ENCODE measurements at regions of chr4 and their contacts with region 1.

Region 1: DNA sequence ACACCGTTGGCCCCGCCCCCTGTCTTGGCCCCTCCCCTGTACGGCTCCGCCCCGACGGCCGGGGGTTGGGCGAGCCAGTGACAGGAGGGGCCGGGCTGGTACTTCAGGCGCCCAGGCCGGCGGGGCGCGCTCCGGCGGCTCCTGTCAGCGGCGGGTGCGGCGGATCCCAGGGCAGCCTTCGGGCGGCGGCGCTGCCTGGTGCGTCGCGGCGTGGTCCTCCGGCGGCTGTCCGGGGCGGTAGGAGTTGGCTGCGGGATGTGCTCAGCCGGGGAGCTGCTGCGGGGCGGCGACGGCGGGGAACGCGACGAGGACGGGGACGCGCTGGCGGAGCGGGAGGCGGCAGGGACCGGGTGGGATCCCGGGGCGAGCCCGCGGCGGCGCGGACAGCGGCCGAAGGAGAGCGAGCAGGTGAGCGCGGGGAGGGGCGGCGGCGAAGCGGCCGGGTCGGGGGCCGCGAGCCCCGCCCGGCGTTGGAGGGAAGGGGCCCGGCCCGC is at the start of gene FAM241A:
- DNase-seq: peak; percentile 86 to 89 (median 86)
- H3K4me3 ChIP-seq: peak within 1 kb of the TSS; percentile 82 to 88
- H3K4me3 Mint-ChIP-seq: peak within 1 kb of the TSS; percentile 87 to 99 (median 94)
- H3K27ac ChIP-seq: peak within 1 kb of the TSS; percentile 82
- H3K27ac Mint-ChIP-seq: peak within 1 kb of the TSS; percentile 85 to 99 (median 96)
- H3K4me1 ChIP-seq: peaks cover 29% of the 10 kb centered on the region
- H3K4me1 Mint-ChIP-seq: peaks cover 22 to 34% (median 26%) of the 10 kb centered on the region in 4 donors
- H3K27me3 ChIP-seq: no peaks in the 10 kb centered on the region
- H3K27me3 Mint-ChIP-seq: no peaks in the 10 kb centered on the region
- total RNA-seq, gene FAM241A: 2.7 TPM

Region 2: DNA sequence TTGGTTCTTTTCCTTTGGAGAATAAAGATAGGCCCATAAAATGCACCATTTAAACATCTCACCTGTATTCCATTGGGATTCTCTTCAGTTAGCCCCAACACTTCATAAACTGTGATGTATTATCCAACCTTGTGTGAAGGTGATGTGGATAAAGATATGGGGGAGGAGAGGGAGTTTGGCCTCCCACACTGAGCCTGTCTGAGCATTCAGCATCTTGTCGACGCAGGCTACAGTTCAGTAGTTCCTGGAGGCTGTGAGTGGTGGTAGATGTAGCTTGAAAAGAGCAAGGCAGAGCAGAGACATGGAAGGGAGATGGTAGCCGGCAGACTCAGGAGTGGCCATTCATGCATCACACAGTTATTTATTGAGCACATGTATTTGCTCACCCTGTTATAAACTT is 1230.1 kb before region 1 on chr4:
- CTCF ChIA-PET with region 1: no interaction called
- POLR2A ChIA-PET with region 1: no interaction called
- intact Hi-C with region 1: no loop called
- DNase-seq: no peak
- H3K4me3 ChIP-seq: no peak overlapping the region
- H3K4me3 Mint-ChIP-seq: no peak overlapping the region
- H3K27ac ChIP-seq: no peak overlapping the region
- H3K27ac Mint-ChIP-seq: no peak overlapping the region
- H3K4me1 ChIP-seq: no peaks in the 10 kb centered on the region
- H3K4me1 Mint-ChIP-seq: no peaks in the 10 kb centered on the region
- H3K27me3 ChIP-seq: no peaks in the 10 kb centered on the region
- H3K27me3 Mint-ChIP-seq: no peaks in the 10 kb centered on the region

Region 3: GRCh38 chr4:111977419-111977965 is 167.9 kb before region 1 on chr4:
- CTCF ChIA-PET with region 1: no interaction called
- POLR2A ChIA-PET with region 1: no interaction called
- intact Hi-C with region 1: no loop called
- DNase-seq: no peak
- H3K4me3 ChIP-seq: no peak overlapping the region
- H3K4me3 Mint-ChIP-seq: no peak overlapping the region
- H3K27ac ChIP-seq: no peak overlapping the region
- H3K27ac Mint-ChIP-seq: no peak overlapping the region
- H3K4me1 ChIP-seq: no peaks in the 10 kb centered on the region
- H3K4me1 Mint-ChIP-seq: no peaks in the 10 kb centered on the region
- H3K27me3 ChIP-seq: no peaks in the 10 kb centered on the region
- H3K27me3 Mint-ChIP-seq: peaks cover 3 to 6% of the 10 kb centered on the region in 2 donors

Region 4: DNA sequence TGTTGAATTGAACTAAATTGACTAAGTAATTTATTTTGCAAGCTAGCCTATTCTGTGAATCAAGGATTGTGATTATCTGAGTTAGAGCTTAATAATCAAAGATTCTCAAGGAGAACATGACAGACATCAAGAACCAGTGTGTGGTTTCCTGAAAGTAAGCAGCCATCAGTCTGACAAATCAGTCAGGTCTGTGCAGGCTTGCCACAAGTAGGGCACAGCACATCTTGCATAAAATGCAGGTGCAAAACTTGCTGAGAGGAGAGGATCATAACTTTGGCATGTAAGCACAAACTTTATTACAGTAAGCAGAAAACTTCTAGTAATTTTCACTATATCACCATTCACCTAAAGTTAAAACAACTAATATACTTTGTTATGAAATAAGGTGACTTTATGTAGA is 22.4 kb after region 1 on chr4:
- CTCF ChIA-PET with region 1: interaction called, 5 read pairs
- POLR2A ChIA-PET with region 1: no interaction called
- intact Hi-C with region 1: loop called (anchors 2 kb)
- DNase-seq: peak; percentile 32 to 57 (median 55)
- H3K4me3 ChIP-seq: no peak overlapping the region
- H3K4me3 Mint-ChIP-seq: peak overlapping the region in 6 of 8 donors; percentile 19 to 69 (median 50)
- H3K27ac ChIP-seq: no peak overlapping the region
- H3K27ac Mint-ChIP-seq: peak overlapping the region in 6 of 7 donors; percentile 7 to 84 (median 38)
- H3K4me1 ChIP-seq: peaks cover 45% of the 10 kb centered on the region
- H3K4me1 Mint-ChIP-seq: peaks cover 20 to 53% (median 30%) of the 10 kb centered on the region in 4 donors
- H3K27me3 ChIP-seq: no peaks in the 10 kb centered on the region
- H3K27me3 Mint-ChIP-seq: no peaks in the 10 kb centered on the region

Region 5: DNA sequence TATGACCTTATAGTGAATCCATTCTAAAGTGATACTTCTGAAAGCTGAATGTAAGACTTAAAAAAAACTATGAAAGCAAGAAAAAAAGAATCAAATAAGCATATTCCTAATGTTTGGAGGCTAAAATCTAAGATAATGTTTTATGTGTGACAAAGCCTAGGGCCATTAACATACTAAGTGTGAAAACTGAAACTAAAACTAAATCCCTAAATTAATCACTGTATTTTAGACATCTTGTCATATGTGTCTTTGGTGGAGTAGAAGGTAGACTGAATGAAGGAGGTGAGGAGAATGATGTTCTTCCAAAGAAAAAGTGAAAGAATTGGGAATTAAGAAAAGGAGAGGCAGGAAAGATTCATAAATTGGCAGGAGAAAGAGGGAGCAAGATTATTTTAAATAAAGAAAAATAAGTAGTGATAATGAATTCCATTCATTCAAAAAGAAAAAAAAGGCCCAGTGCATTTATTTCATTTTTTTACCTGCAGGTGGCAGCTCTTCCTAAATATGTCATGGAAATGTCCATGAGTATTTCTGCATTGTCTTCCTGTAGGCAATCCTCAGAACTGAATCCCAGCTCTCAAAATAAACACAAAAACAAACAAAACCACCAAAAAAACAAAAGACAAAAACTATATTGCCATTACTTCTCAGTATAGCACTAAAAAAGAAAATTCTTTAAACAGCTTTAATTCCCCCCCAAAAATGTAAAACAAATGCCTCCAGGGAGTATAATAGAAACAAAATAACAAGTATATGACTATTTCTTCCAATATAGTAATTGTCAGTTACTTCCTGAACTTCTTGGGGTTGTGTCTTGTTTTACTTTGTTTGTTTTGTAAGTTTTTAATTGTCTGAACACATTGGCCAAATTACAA is 69.3 kb after region 1 on chr4:
- CTCF ChIA-PET with region 1: no interaction called
- POLR2A ChIA-PET with region 1: no interaction called
- intact Hi-C with region 1: loop called (anchors 5 kb)
- DNase-seq: peak in 4 of 5 donors; percentile 17 to 24 (median 20)
- H3K4me3 ChIP-seq: no peak overlapping the region
- H3K4me3 Mint-ChIP-seq: no peak overlapping the region
- H3K27ac ChIP-seq: no peak overlapping the region
- H3K27ac Mint-ChIP-seq: peak overlapping the region in 2 of 7 donors; percentile 2 to 26
- H3K4me1 ChIP-seq: no peaks in the 10 kb centered on the region
- H3K4me1 Mint-ChIP-seq: peaks cover 0 to 5% (median 2%) of the 10 kb centered on the region in 4 donors
- H3K27me3 ChIP-seq: no peaks in the 10 kb centered on the region
- H3K27me3 Mint-ChIP-seq: no peaks in the 10 kb centered on the region

Region 6: DNA sequence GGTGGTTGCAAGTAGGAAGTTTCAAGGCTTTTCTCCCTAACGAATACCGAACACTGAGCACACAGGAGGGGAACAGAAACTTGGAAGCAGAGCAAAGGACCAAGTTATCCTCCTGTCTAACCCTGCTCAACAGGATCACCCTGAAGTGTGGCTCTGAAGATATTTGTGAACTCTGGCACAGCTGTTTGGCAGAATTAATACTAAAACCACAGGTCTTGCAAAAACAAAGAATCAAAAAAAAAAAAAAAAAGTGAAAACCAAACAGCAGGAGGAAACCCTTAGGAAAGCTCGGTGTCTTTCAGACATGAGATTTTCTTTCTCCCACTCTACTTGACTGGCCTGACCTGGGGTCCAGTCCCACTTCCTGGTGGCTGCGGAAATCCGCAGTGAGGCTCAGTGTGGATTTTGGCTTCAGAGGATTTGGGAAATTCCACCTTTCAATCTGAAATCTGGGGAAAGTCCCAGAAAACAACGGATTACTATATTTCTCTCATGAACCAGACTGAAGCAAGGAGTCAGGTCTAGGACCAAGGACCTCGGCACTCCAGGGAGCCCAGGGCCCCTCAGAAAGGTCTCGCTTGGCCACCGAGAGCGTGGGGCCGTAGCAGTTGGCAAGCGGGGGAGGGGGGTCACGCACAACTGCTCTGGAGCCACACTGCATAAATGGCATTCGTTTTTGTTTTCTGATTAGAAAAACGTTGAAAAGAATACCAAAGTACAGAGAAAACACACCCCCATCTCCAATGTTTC is 139.5 kb after region 1 on chr4:
- CTCF ChIA-PET with region 1: no interaction called
- POLR2A ChIA-PET with region 1: interaction called, 20 read pairs
- intact Hi-C with region 1: loop called (anchors 2 kb)
- DNase-seq: peak in 3 of 5 donors; percentile 15 to 22 (median 15)
- H3K4me3 ChIP-seq: peak overlapping the region; percentile 88 to 94
- H3K4me3 Mint-ChIP-seq: peak overlapping the region; percentile 92 to 98 (median 96)
- H3K27ac ChIP-seq: peak overlapping the region; percentile 79
- H3K27ac Mint-ChIP-seq: peak overlapping the region; percentile 91 to 99 (median 94)
- H3K4me1 ChIP-seq: peaks cover 85% of the 10 kb centered on the region
- H3K4me1 Mint-ChIP-seq: peaks cover 58 to 96% (median 75%) of the 10 kb centered on the region in 4 donors
- H3K27me3 ChIP-seq: no peaks in the 10 kb centered on the region
- H3K27me3 Mint-ChIP-seq: no peaks in the 10 kb centered on the region

Region 7: DNA sequence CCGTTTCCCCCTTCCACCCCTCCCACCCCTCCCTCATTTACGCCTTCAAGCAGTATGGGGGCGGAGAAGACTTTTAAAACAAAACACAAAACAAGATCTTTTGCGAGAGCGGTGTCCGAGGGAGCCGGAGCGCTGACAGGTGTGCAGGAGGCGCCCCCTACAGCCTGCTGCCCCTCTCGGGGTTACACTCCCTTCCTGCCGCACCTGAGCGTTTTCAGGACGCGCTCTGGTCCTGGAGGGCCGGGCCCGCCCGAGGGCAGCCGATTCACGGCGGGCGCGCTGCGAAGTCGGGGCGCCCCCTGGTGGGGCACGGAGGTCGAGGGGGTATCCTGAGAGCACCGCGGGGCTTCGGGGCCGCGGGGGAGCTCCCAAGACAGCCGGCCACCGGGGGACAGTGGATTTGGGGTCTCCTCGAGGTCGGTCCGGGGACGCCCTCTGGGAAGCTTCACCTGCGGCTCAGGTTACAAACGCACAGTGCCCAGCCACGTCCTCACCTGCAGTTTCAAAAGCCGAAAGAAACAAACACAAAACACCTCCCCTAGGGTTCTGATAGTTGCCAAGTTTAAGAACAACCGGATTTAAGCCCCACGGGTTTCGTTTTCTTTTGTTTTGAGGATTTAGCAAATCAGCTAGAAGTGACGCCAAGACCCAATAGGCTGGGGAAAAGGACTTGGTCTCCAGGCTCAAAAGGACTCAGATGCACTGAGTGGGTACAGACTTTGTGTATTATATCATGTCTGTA is 378.6 kb after region 1 on chr4:
- CTCF ChIA-PET with region 1: interaction called, 5 read pairs
- POLR2A ChIA-PET with region 1: no interaction called
- intact Hi-C with region 1: loop called (anchors 5 kb)
- DNase-seq: peak; percentile 66 to 74 (median 67)
- H3K4me3 ChIP-seq: peak overlapping the region; percentile 20 to 46
- H3K4me3 Mint-ChIP-seq: peak overlapping the region; percentile 81 to 94 (median 86)
- H3K27ac ChIP-seq: no peak overlapping the region
- H3K27ac Mint-ChIP-seq: peak overlapping the region in 1 of 7 donors; percentile 65
- H3K4me1 ChIP-seq: peaks cover 24% of the 10 kb centered on the region
- H3K4me1 Mint-ChIP-seq: peaks cover 9 to 51% (median 19%) of the 10 kb centered on the region in 4 donors
- H3K27me3 ChIP-seq: peaks cover 45% of the 10 kb centered on the region
- H3K27me3 Mint-ChIP-seq: peaks cover 44 to 46% of the 10 kb centered on the region in 2 donors

Measured in CD4-positive, alpha-beta memory T cell (primary cell).